CD14-positive monocyte (primary cell): ENCODE measurements at regions of chr19 and their contacts with region 1.

Region 1: GRCh38 chr19:40598121-40598917 is 2.9 kb upstream of the LTBP4 start:
- DNase-seq: peak; percentile 77 to 84 (median 83)
- H3K4me3 ChIP-seq: no peak overlapping the region
- H3K4me3 Mint-ChIP-seq: peak overlapping the region in 1 of 2 donors; percentile 93
- H3K27ac ChIP-seq: no peak overlapping the region
- H3K27ac Mint-ChIP-seq: peak overlapping the region in 1 of 7 donors; percentile 52
- H3K4me1 ChIP-seq: peaks cover 32 to 57% of the 10 kb centered on the region in 2 donors
- H3K4me1 Mint-ChIP-seq: peaks cover 50% of the 10 kb centered on the region
- H3K27me3 ChIP-seq: peaks cover 54 to 80% of the 10 kb centered on the region in 2 donors
- H3K27me3 Mint-ChIP-seq: peaks cover 76 to 92% (median 86%) of the 10 kb centered on the region in 3 donors
- CTCF ChIP-seq: peak; percentile 95

Region 2: GRCh38 chr19:40529093-40529954 is 69.0 kb before region 1 on chr19:
- intact Hi-C with region 1: loop called (anchors 1 to 5 kb)
- DNase-seq: peak; percentile 69 to 83 (median 80)
- H3K4me3 ChIP-seq: peak overlapping the region; percentile 32 to 79 (median 43)
- H3K4me3 Mint-ChIP-seq: peak overlapping the region; percentile 71 to 89
- H3K27ac ChIP-seq: no peak overlapping the region
- H3K27ac Mint-ChIP-seq: peak overlapping the region in 2 of 7 donors; percentile 37 to 69
- H3K4me1 ChIP-seq: peaks cover 13 to 17% of the 10 kb centered on the region in 2 donors
- H3K4me1 Mint-ChIP-seq: peaks cover 18% of the 10 kb centered on the region
- H3K27me3 ChIP-seq: peaks cover 16 to 37% of the 10 kb centered on the region in 2 donors
- H3K27me3 Mint-ChIP-seq: peaks cover 36 to 54% (median 52%) of the 10 kb centered on the region in 3 donors
- CTCF ChIP-seq: peak; percentile 99

Region 3: DNA sequence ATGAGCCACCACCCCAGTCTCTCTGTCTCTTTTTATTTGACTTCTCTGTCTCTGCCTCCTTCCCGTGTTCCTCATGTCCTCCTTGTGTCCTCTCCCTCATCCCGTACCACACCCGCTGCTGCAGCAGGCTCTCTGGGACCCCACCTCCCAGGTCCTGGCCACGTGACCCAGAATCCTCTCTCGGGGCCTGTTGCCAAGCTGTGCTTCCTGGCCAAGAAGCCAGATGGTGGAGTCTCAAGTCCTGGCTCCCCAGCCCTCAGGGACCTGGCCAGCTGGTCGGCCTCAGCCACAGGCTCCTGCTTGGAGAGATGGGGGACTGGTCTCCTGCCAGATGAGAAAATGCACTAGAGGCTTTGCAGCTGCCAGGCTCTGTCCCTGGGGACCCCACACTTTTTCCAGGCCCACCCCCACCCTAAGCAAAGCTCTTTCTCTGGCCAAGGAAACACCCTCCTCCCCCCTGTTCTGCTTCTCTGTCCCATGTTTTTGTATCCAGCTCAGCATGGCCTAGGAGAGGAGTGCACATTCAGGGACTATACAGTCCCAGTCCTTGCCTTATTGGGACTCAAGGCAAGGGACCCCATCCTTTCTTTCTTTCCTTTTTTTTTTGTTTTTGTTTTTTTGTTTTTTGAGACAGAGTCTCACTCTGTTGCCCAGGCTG is 56.0 kb before region 1 on chr19:
- intact Hi-C with region 1: loop called (anchors 2 kb)
- DNase-seq: no peak
- H3K4me3 ChIP-seq: no peak overlapping the region
- H3K4me3 Mint-ChIP-seq: peak overlapping the region in 1 of 2 donors; percentile 43
- H3K27ac ChIP-seq: no peak overlapping the region
- H3K27ac Mint-ChIP-seq: peak overlapping the region in 1 of 7 donors; percentile 28
- H3K4me1 ChIP-seq: no peaks in the 10 kb centered on the region
- H3K4me1 Mint-ChIP-seq: no peaks in the 10 kb centered on the region
- H3K27me3 ChIP-seq: no peaks in the 10 kb centered on the region
- H3K27me3 Mint-ChIP-seq: peaks cover 13 to 32% (median 28%) of the 10 kb centered on the region in 3 donors
- CTCF ChIP-seq: no peak

Region 4: DNA sequence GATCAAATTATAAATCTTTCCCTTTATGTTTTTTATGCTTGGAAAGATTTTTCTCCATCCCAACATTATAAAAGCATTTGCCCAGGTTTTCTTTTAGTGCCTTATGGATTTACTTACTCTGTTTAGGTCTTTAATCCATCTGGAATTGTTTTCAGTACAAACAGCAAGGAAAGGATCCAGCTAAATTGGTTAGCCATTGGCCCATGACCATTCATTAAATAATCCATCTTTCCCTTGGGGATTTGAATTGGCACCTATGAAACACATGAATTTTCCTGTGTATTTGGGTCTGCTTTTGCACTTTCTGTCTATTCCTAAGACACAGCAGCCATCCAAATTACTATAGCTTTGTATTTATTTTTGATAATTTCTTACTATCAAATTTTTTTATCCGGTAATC is 50.5 kb before region 1 on chr19:
- intact Hi-C with region 1: loop called in 1 of 2 experiments (anchors 2 kb)
- DNase-seq: no peak
- H3K4me3 ChIP-seq: no peak overlapping the region
- H3K4me3 Mint-ChIP-seq: peak overlapping the region in 1 of 2 donors; percentile 51
- H3K27ac ChIP-seq: no peak overlapping the region
- H3K27ac Mint-ChIP-seq: no peak overlapping the region
- H3K4me1 ChIP-seq: no peaks in the 10 kb centered on the region
- H3K4me1 Mint-ChIP-seq: peaks cover 6% of the 10 kb centered on the region
- H3K27me3 ChIP-seq: peaks cover 7 to 32% of the 10 kb centered on the region in 2 donors
- H3K27me3 Mint-ChIP-seq: peaks cover 45 to 58% (median 48%) of the 10 kb centered on the region in 3 donors
- CTCF ChIP-seq: no peak

Region 5: DNA sequence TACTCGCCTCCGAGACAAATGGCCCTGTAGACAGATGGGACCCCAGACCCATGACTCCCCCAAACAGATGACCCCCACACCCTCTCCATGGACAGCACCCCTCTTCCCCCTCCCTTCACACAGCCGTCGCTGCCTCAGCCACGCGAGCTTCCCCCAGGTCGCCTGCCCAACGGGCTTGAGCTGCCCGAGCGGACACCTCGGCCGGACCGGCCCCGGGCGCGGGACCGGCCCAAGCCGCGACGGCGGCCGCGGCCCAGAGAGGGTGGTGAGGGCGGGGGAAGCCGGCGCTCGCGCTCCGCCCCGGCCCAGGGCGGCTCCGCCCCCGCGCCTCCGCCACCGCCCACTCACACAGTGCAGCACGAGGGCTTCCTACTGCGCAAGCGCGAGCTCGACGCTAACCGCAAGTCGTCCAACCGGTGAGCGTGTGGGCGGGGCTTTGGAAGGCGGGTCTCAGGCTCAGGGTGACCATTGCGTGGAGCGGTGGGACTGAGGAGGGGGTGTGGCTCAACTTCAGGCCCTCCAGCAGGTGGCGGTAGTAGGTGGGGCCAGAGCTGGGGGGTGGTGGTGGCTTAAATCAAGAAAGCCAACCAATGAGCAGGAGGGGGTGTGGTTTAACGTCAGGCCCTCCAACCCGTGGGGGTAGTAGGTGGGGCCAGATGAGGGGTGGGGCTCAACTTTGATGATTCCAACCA is 27.9 kb before region 1 on chr19:
- intact Hi-C with region 1: loop called (anchors 2 to 5 kb)
- DNase-seq: peak; percentile 100
- H3K4me3 ChIP-seq: peak overlapping the region in 2 of 3 experiments; percentile 32 to 70
- H3K4me3 Mint-ChIP-seq: peak overlapping the region; percentile 76 to 87
- H3K27ac ChIP-seq: peak overlapping the region in 1 of 2 donors; percentile 25
- H3K27ac Mint-ChIP-seq: peak overlapping the region; percentile 77 to 93 (median 83)
- H3K4me1 ChIP-seq: peaks cover 17 to 28% of the 10 kb centered on the region in 2 donors
- H3K4me1 Mint-ChIP-seq: peaks cover 13% of the 10 kb centered on the region
- H3K27me3 ChIP-seq: peaks cover 19 to 45% of the 10 kb centered on the region in 2 donors
- H3K27me3 Mint-ChIP-seq: peaks cover 43 to 48% (median 45%) of the 10 kb centered on the region in 3 donors
- CTCF ChIP-seq: peak; percentile 27